A673 (cell line): ENCODE measurements at regions of chr12 and their contacts with region 1.

Region 1: DNA sequence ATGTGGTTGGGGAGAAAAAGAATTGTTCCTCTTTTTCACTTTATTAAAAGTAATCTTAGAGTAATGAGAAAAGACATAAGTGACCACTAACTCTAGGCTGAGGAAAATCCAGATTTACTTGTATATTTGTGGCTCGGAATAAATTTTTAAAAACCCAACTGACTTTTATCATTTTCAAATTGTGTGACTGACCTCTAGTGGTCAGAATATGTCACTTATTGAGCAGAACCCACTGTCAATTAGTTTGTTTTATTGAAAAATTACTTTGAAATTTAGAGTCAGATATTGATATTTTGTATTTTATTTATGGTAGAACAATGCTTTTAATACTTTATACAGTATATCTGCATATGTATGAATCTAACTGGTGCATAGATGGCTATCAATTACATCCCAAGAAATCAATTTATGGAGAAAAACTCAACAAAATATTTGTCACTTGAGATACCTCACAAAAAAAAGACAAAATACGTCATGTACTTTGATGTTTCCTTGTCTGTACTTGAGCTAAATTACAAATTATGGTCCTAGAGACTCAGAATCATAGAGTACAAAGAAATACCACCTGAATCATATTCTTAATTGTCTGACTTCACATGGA is 229.4 kb downstream of the CNTN1 start:
- DNase-seq: peak; percentile 49
- H3K4me3 ChIP-seq: no peak overlapping the region
- H3K27ac ChIP-seq: no peak overlapping the region
- H3K4me1 ChIP-seq: no peaks in the 10 kb centered on the region
- H3K27me3 ChIP-seq: no peaks in the 10 kb centered on the region
- CTCF ChIP-seq: peak; percentile 76

Region 2: GRCh38 chr12:40152783-40153383 is 768.8 kb before region 1 on chr12:
- CTCF ChIA-PET with region 1: no interaction called
- POLR2A ChIA-PET with region 1: no interaction called
- intact Hi-C with region 1: loop called (anchors 10 kb)
- DNase-seq: peak; percentile 73
- H3K4me3 ChIP-seq: no peak overlapping the region
- H3K27ac ChIP-seq: no peak overlapping the region
- H3K4me1 ChIP-seq: no peaks in the 10 kb centered on the region
- H3K27me3 ChIP-seq: no peaks in the 10 kb centered on the region
- CTCF ChIP-seq: peak; percentile 88

Region 3: DNA sequence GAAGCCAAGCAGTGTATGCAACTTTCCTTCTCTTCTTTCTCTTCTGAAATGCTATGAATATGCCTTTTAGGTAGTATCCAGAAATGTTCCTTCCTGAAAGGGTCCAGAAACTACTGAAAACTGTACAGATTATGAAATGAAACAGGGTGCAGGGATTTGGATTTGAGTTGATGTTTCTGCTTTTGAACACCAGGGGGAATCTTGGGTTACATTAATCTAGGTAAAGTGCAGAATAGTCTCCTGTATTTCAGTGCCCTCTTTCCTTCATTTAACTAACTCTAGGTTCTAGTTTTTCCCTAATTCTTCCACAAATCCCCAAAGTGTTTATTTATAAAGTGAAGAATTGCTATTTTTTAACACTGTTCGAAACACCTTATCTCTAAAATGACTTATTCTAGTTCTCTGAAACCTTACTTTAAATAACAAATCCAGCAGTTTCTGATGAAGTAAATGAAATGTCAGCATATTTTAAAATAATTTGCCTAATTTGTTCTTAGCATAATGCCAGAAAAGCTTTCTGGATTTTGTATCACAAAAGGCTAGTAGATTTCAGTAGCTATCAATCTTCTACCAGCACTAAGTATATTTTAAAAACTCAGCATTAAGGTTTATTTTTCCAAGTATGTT is 585.0 kb before region 1 on chr12:
- CTCF ChIA-PET with region 1: no interaction called
- POLR2A ChIA-PET with region 1: no interaction called
- intact Hi-C with region 1: loop called (anchors 5 kb)
- DNase-seq: peak; percentile 37
- H3K4me3 ChIP-seq: no peak overlapping the region
- H3K27ac ChIP-seq: no peak overlapping the region
- H3K4me1 ChIP-seq: no peaks in the 10 kb centered on the region
- H3K27me3 ChIP-seq: no peaks in the 10 kb centered on the region
- CTCF ChIP-seq: peak; percentile 65

Region 4: GRCh38 chr12:40446385-40446784 is 475.3 kb before region 1 on chr12:
- CTCF ChIA-PET with region 1: no interaction called
- POLR2A ChIA-PET with region 1: no interaction called
- intact Hi-C with region 1: loop called (anchors 5 kb)
- DNase-seq: peak; percentile 69
- H3K4me3 ChIP-seq: no peak overlapping the region
- H3K27ac ChIP-seq: no peak overlapping the region
- H3K4me1 ChIP-seq: peaks cover 41% of the 10 kb centered on the region
- H3K27me3 ChIP-seq: no peaks in the 10 kb centered on the region
- CTCF ChIP-seq: peak; percentile 61

Region 5: DNA sequence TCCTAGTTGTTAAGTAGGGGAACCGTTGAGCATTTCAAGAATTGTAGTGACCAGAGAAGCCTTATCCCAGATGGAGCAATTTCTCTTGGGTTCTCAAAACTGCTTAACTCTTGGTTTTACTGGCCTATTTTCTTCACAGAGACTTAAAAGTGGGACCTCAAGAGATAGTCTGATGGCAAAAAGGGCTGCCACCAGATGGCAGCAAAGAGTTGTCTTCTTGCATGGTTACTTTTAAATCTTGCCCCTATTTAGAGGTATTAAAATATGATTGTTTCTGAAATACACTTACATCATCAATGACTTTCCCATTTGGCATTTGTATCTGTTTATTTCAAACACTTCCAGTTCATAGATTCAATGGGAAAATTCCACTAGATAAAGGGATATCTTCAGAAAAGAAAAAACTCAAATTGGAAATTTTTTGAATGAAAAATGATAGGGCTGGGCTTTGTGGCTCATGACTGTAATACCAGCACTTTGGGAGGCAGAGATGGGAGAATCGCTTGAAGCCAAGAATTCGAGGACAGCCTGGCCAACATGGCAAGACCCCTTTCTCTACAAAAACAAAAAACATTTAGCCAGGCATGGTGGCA is 299.3 kb before region 1 on chr12:
- CTCF ChIA-PET with region 1: no interaction called
- POLR2A ChIA-PET with region 1: no interaction called
- intact Hi-C with region 1: loop called (anchors 1 kb)
- DNase-seq: peak; percentile 61
- H3K4me3 ChIP-seq: no peak overlapping the region
- H3K27ac ChIP-seq: no peak overlapping the region
- H3K4me1 ChIP-seq: no peaks in the 10 kb centered on the region
- H3K27me3 ChIP-seq: no peaks in the 10 kb centered on the region
- CTCF ChIP-seq: peak; percentile 81

Region 6: DNA sequence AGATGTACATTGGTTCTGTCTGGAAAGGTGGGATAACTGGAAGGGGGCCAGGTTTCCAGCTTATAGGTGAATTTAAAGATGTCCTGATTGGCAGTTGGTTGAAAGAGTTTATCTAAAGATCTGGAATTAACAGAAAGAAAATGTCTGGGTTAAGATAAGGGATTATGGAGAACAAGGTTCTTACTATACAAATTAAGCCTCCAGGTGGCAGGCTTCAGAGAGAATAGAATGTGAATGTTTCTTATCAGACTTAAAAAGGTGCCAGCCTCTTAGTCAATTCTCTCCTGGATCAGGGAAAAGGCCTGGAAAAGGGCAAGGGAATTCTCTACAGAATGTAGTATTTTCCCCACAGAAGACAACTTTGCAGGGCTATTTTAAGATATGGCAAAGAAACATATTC is 176.3 kb before region 1 on chr12:
- CTCF ChIA-PET with region 1: no interaction called
- POLR2A ChIA-PET with region 1: no interaction called
- intact Hi-C with region 1: loop called (anchors 10 kb)
- DNase-seq: peak; percentile 12
- H3K4me3 ChIP-seq: no peak overlapping the region
- H3K27ac ChIP-seq: no peak overlapping the region
- H3K4me1 ChIP-seq: no peaks in the 10 kb centered on the region
- H3K27me3 ChIP-seq: no peaks in the 10 kb centered on the region
- CTCF ChIP-seq: peak; percentile 29; the same call in 1 of the 2 replicates

Region 7: GRCh38 chr12:40946612-40947194 is 25.0 kb after region 1 on chr12:
- CTCF ChIA-PET with region 1: no interaction called
- POLR2A ChIA-PET with region 1: no interaction called
- intact Hi-C with region 1: no loop called
- DNase-seq: peak; percentile 61
- H3K4me3 ChIP-seq: no peak overlapping the region
- H3K27ac ChIP-seq: no peak overlapping the region
- H3K4me1 ChIP-seq: no peaks in the 10 kb centered on the region
- H3K27me3 ChIP-seq: no peaks in the 10 kb centered on the region
- CTCF ChIP-seq: peak; percentile 75

Region 8: DNA sequence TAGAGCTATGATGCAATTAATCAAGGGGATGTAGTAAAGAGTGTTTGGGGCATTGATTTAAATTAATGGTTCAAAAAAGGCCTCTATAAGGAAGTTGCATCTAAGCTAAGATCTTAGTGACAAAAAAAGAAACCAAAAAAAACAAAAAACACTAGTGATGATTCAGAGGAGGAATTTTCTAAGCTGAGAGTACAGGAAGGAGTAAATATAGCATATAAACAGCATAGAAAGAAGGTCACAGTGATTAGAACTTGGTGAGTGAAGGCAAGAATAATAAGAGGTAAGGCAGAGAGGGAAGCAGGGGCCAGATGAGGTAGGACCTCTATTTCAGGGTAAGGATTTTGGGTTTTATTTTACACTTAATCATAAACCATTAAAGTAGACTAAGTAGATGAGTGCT is 218.5 kb after region 1 on chr12:
- CTCF ChIA-PET with region 1: interaction called, 10 read pairs
- POLR2A ChIA-PET with region 1: no interaction called
- intact Hi-C with region 1: no loop called
- DNase-seq: no peak
- H3K4me3 ChIP-seq: no peak overlapping the region
- H3K27ac ChIP-seq: no peak overlapping the region
- H3K4me1 ChIP-seq: no peaks in the 10 kb centered on the region
- H3K27me3 ChIP-seq: no peaks in the 10 kb centered on the region
- CTCF ChIP-seq: no peak

Region 9: GRCh38 chr12:41274643-41275042 is 353.0 kb after region 1 on chr12:
- CTCF ChIA-PET with region 1: no interaction called
- POLR2A ChIA-PET with region 1: no interaction called
- intact Hi-C with region 1: no loop called
- DNase-seq: no peak
- H3K4me3 ChIP-seq: no peak overlapping the region
- H3K27ac ChIP-seq: no peak overlapping the region
- H3K4me1 ChIP-seq: peaks cover 14% of the 10 kb centered on the region
- H3K27me3 ChIP-seq: no peaks in the 10 kb centered on the region
- CTCF ChIP-seq: no peak